ENCODE measurements at regions of chr5 and their contacts with region 1.

Region 1: GRCh38 chr5:66498791-66499207 is 97.4 kb upstream of the MAST4 start:
- H3K4me3 Mint-ChIP-seq: no peak overlapping the region
- H3K27ac Mint-ChIP-seq: no peak overlapping the region
- H3K4me1 Mint-ChIP-seq: no peaks in the 10 kb centered on the region
- H3K27me3 Mint-ChIP-seq: no peaks in the 10 kb centered on the region

Region 2: GRCh38 chr5:65846101-65846500 is 652.7 kb before region 1 on chr5:
- intact Hi-C with region 1: no loop called
- H3K4me3 Mint-ChIP-seq: no peak overlapping the region
- H3K27ac Mint-ChIP-seq: no peak overlapping the region
- H3K4me1 Mint-ChIP-seq: peaks cover 13% of the 10 kb centered on the region
- H3K27me3 Mint-ChIP-seq: no peaks in the 10 kb centered on the region

Region 3: DNA sequence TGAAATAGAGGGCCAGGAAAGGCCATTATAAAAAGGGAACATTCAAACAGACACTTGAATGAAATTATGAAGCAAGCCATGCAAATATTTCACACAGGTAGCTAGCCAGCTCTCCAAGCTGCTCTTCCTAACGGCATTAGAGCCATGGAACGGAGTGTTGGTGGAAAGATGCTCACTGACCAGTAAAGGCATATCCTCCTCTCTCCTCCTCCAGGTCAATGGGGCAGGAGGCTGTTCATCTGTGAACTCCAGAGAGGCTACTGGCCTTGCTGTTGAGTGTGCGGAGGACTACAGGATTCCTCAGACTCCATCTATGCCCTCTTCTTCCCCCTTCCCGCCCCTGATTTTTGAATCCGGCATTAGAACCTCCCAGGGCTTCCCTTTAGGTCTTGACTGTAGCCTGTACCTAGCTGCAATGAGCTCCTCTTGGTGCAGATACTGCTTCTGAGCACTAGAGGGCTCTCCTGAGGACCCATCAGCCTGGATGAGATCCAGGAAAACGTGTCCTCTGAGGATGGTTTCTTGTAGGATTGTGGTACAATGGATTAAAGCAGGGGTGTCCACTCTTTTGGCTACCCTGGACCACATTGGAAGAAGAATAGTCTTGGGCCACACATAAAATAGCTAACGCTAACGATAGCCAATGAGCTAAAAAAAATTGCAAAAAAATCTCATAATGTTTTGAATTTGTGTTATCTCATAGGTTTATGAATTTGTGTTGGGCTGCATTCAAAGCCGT is 192.5 kb before region 1 on chr5:
- intact Hi-C with region 1: loop called (anchors 2 kb)
- H3K4me3 Mint-ChIP-seq: no peak overlapping the region
- H3K27ac Mint-ChIP-seq: no peak overlapping the region
- H3K4me1 Mint-ChIP-seq: no peaks in the 10 kb centered on the region
- H3K27me3 Mint-ChIP-seq: peaks cover 14% of the 10 kb centered on the region

Measured in dendritic cell treated with granulocyte-macrophage colony-stimulating factor and Interleukin-4, amounts not matched to agents 40 ng/mL and 50 ng/mL, for 4 days (primary cell).